Naive thymus-derived CD4-positive, alpha-beta T cell (primary cell): ENCODE measurements at regions of chr5 and their contacts with region 1.

Region 1: DNA sequence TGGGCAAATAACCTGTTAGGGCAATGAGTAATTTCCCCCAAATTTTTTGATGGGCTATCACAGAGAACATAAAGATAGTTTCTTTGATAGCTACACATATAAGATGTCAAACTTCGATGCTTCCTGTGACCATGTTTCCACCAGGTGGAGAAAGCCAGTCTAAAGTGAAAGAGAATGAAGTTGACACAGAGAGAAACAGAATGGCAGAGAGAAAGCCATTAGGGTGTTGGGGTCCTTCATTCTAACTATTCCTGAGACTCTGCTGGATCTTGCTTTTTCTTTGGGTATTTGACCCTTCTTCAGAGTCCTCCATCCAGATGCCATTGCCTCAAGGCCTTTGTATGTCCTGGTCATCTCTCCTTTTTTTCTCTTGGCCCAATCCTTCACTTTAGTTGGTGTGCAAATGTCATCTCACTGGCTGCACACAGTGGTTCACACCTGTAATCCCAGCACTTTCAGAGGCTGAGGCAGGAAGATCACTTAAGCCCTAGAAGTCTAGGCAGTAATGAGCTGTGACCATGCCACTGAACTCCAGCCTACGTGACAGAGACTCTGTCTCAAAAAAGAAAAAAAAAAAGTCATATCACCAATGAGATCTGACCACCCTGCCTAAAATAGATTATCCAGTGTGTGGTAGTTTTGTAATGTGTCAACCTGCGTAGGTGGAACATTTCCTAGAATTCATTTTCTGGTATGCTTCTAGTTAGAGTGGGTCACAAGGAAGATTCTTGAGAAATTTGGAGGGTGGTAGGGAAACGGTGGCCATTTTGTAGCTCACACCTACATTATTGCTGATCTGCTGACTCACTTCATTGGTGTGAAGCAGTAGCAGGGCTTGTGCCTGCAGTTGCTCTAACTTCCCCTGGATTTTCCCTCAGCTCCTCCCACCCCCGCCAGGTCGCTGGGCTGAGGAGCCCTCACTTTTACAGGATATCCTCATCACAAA is 20.8 kb upstream of the KIF2A start:
- DNase-seq: peak in 3 of 9 donors; percentile 15 to 78 (median 19)
- ATAC-seq: peak; percentile 34
- H3K4me3 ChIP-seq: no peak overlapping the region
- H3K4me3 Mint-ChIP-seq: peak overlapping the region in 1 of 10 donors; percentile 75
- H3K27ac ChIP-seq: no peak overlapping the region
- H3K27ac Mint-ChIP-seq: peak overlapping the region in 5 of 9 donors; percentile 2 to 96 (median 37)
- H3K4me1 ChIP-seq: peaks cover 2 to 30% of the 10 kb centered on the region in 2 donors
- H3K4me1 Mint-ChIP-seq: peaks cover 3 to 63% (median 34%) of the 10 kb centered on the region in 7 donors
- H3K27me3 ChIP-seq: no peaks in the 10 kb centered on the region
- H3K27me3 Mint-ChIP-seq: no peaks in the 10 kb centered on the region

Region 2: DNA sequence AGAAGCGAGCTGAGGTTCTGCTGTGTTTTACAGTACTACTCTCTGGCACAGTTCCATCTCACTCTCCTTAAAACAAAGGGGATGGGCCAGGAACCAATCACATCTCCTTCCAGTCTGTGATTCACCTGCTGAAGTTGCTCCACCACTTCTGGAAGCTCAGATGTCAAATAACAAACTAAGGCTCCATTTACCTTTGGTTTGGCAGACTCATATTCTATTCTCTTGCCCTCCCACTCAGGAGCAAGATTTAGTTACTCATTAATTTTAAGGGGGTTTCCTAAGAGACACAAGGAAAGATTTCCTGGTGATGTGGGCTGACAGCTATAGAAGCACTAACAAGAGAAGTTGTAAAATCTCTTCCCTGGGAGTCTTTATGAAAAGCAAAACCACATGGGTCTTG is 17.0 kb before region 1 on chr5:
- CTCF ChIA-PET with region 1: no interaction called
- POLR2A ChIA-PET with region 1: interaction called, 3 read pairs
- intact Hi-C with region 1: loop called (anchors 2 kb)
- DNase-seq: no peak
- ATAC-seq: no peak
- H3K4me3 ChIP-seq: no peak overlapping the region
- H3K4me3 Mint-ChIP-seq: peak overlapping the region in 4 of 10 donors; percentile 8 to 52 (median 32)
- H3K27ac ChIP-seq: no peak overlapping the region
- H3K27ac Mint-ChIP-seq: peak overlapping the region in 3 of 9 donors; percentile 21 to 71 (median 29)
- H3K4me1 ChIP-seq: peaks cover 5 to 13% of the 10 kb centered on the region in 2 donors
- H3K4me1 Mint-ChIP-seq: peaks cover 7 to 34% (median 22%) of the 10 kb centered on the region in 7 donors
- H3K27me3 ChIP-seq: no peaks in the 10 kb centered on the region
- H3K27me3 Mint-ChIP-seq: no peaks in the 10 kb centered on the region

Region 3: GRCh38 chr5:62297026-62297425 is 11.8 kb after region 1 on chr5:
- CTCF ChIA-PET with region 1: interaction called, 3 read pairs
- POLR2A ChIA-PET with region 1: interaction called, 5 read pairs
- intact Hi-C with region 1: loop called in 1 of 2 experiments (anchors 1 kb)
- DNase-seq: peak in 3 of 9 donors; percentile 18 to 21 (median 20)
- ATAC-seq: no peak
- H3K4me3 ChIP-seq: no peak overlapping the region
- H3K4me3 Mint-ChIP-seq: peak overlapping the region; percentile 30 to 81 (median 72)
- H3K27ac ChIP-seq: no peak overlapping the region
- H3K27ac Mint-ChIP-seq: peak overlapping the region in 8 of 9 donors; percentile 15 to 84 (median 74)
- H3K4me1 ChIP-seq: peaks cover 46% of the 10 kb centered on the region in 2 donors
- H3K4me1 Mint-ChIP-seq: peaks cover 24 to 69% (median 55%) of the 10 kb centered on the region in 7 donors
- H3K27me3 ChIP-seq: no peaks in the 10 kb centered on the region
- H3K27me3 Mint-ChIP-seq: no peaks in the 10 kb centered on the region